Sigmoid colon (tissue), 7 donors: ENCODE measurements at regions of chr19 and their contacts with region 1.

Region 1: GRCh38 chr19:51570962-51571575 is at the start of gene ZNF175:
- DNase-seq: peak; percentile 97
- H3K4me3 ChIP-seq: peak within 1 kb of the TSS; percentile 51 to 75 (median 68)
- H3K27ac ChIP-seq: peak within 1 kb of the TSS; percentile 63 to 78 (median 76)
- H3K4me1 ChIP-seq: peaks cover 0 to 17% (median 13%) of the 10 kb centered on the region in 4 donors
- H3K27me3 ChIP-seq: no peaks in the 10 kb centered on the region
- CTCF ChIP-seq: no peak
- EP300 ChIP-seq: no peak
- POLR2A ChIP-seq: no peak
- total RNA-seq, gene ZNF175: 3.3 to 5.8 (median 5.2) TPM

Region 2: GRCh38 chr19:51593969-51594773 is 23.1 kb after region 1 on chr19:
- intact Hi-C with region 1: loop called (anchors 1 kb)
- DNase-seq: peak; percentile 99
- H3K4me3 ChIP-seq: peak overlapping the region; percentile 53 to 62 (median 58)
- H3K27ac ChIP-seq: peak overlapping the region; percentile 52 to 66 (median 62)
- H3K4me1 ChIP-seq: peaks cover 0 to 18% (median 15%) of the 10 kb centered on the region in 4 donors
- H3K27me3 ChIP-seq: peaks cover 0 to 14% (median 13%) of the 10 kb centered on the region in 3 donors
- CTCF ChIP-seq: no peak
- EP300 ChIP-seq: peak in 1 of 4 donors; percentile 25
- POLR2A ChIP-seq: no peak